ENCODE measurements at regions of chr12 and their contacts with region 1.

Region 1: DNA sequence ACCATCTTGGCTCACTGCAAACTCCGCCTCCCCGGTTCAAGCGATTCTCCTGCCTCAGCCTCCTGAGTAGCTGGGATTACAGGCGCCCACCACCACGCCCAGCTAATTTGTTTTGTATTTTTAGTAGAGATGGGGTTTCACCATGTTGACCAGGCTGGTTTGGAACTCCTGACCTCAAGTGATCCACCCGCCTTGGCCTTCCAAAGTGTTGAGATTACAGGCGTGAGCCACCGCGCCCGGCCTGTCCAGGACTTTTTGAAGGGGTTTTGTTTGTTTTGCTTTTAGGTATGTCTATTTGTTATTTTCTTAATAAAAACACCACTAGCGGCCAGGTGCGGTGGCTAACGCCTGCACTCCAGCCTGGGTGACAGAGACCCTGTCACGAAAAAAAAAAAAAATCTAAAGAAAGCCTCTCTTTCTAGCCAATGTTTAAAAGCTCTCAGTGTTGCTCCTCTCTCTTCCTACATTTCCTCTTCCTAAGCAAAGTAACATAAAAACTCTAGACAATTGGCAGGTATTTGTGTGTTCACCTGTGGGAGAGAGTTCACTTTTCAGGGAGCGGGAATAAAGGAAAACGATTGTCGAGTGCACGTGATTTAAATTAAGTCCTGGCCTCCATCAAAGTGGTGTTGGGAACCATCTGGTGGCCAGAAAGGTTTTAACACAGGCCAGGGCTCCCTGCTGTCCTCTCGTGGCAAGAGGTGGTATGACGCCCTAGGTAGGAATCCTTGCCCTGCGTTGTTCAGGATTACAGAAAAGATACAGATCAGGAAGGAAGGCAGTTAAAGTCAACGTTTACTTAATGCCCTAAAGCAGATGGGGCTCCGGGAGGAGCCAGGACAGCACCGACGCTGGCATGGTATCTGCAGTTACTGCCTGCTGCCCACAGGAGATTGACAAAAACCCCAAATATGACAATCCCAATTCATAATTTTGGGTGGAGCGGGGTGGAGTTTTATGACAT is 36.2 kb upstream of the ATP23 start:
- DNase-seq: peak; percentile 88
- ATAC-seq: peak; percentile 97
- H3K4me3 Mint-ChIP-seq: no peak overlapping the region
- H3K27ac Mint-ChIP-seq: no peak overlapping the region
- H3K4me1 Mint-ChIP-seq: peaks cover 8% of the 10 kb centered on the region
- H3K27me3 Mint-ChIP-seq: peaks cover 20% of the 10 kb centered on the region

Region 2: DNA sequence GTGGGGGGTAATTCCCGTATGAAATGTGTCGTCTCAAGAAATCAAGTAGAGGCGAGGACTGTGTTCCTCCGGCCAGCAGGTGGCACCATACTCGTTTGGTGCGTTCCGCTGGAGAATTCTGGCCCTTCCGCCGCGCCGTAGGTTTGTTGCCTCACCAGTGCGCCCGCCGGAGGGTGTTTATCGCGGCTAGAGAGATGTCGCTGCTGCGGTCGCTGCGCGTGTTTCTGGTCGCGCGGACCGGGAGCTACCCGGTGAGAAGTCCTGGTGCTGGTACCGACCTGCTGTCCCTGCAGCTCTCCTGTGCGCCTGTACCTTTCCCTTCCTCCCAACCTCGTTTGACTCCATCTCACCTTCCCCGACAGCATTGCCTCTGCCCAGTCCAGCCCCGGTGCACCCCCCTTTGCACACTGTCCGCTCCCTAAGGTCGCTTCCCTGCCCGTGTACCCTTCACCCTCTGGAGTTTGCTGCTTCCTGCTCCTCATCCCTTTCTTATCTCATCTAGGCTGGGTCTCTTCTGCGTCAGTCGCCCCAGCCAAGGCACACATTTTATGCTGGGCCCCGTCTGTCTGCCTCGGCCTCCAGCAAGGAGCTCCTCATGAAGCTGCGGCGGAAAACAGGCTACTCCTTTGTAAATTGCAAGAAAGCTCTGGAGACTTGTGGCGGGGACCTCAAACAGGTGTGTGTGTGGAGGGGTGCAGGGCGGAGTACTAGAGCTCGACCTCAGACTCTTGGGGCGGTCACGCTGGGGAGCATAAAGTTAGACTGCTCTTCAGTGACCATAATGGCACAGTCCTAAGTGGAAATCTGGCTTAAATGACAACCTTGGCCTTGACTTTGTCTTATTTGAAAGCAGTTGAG is 122.3 kb before region 1 on chr12 and contains the start of gene TSFM:
- CTCF ChIA-PET with region 1: interaction called, 15 read pairs
- DNase-seq: peak; percentile 97
- ATAC-seq: peak; percentile 93
- H3K4me3 Mint-ChIP-seq: peak within 1 kb of the TSS; percentile 97
- H3K27ac Mint-ChIP-seq: peak within 1 kb of the TSS; percentile 96
- H3K4me1 Mint-ChIP-seq: peaks cover 38% of the 10 kb centered on the region
- H3K27me3 Mint-ChIP-seq: no peaks in the 10 kb centered on the region
- total RNA-seq, gene TSFM: 32.2 to 45.8 TPM

Region 3: DNA sequence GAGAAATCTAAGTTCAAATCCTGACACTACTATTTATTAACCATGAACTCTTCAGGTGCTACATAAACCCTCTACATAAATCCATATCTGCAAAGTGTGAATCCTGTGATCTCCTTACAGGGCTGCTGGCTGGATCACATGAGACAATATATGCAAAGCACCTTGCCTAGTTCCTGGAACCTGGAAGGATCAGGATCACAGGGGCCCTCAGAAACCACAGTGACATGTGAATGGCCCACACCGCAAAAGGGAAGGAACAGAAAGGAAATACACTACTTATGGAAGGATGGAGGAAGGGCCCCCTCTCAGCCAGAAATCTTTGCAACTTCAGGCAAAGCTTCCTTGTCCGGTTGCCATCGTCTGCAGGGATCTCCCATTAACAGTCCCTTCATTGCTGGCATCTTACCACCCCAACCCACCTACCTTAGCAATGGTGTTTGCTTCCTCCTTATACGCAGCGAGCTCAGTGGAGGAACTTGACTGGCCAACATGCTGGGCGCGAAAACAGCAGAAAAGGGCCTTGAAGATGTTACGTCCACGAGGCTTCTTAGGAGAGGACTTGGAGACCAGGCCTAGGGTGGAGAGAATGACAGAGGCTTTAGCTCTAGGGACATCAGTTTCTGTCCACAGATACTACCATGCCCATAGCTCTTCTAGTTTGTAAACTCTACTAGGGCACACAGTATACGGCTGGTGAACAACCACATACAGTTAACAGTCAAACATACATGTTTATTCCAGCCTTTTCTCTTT is 75.9 kb before region 1 on chr12:
- CTCF ChIA-PET with region 1: interaction called, 68 read pairs
- DNase-seq: no peak
- ATAC-seq: no peak
- H3K4me3 Mint-ChIP-seq: no peak overlapping the region
- H3K27ac Mint-ChIP-seq: no peak overlapping the region
- H3K4me1 Mint-ChIP-seq: peaks cover 32% of the 10 kb centered on the region
- H3K27me3 Mint-ChIP-seq: no peaks in the 10 kb centered on the region

Region 4: DNA sequence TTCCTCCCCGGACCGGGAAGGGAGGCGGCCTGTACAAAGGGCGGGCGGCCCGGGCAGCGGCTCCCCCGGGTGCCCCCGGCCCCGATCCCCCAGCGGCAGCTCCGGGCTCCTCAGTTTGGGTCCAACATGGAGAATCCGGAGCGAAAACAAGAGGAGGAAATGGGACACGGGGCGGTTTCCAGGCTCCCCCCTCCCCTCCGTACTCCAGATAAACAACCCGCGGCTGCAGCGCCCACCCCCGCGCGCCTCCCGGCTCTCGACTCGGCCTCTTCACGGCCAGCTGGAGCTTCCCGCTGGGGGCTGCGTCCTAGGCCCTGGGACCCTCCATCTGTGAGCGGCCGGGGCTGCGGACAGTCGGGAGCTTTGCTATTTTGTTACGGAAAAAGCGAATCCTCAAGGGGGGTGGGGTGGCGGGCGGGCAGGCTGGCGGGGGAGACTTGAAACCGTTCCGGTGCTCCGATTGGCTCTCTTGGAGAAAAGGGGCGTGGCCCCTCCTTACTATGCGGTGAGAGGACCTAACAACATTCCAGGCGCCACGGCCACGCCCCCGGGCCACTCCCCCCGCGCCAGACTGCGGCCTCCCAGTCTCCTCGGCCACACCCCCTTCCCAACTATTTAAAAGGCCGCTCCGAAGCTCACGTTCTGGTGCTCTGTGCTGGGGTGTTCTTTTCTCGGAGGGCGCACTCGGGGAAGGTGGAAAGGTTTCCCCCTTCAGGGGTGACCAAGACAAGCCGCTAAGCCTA is 58.4 kb before region 1 on chr12 and contains the start of gene CTDSP2:
- CTCF ChIA-PET with region 1: interaction called, 42 read pairs
- DNase-seq: peak; percentile 91
- ATAC-seq: peak; percentile 53
- H3K4me3 Mint-ChIP-seq: peak within 1 kb of the TSS; percentile 74
- H3K27ac Mint-ChIP-seq: peak within 1 kb of the TSS; percentile 65
- H3K4me1 Mint-ChIP-seq: peaks cover 33% of the 10 kb centered on the region
- H3K27me3 Mint-ChIP-seq: peaks cover 26% of the 10 kb centered on the region
- total RNA-seq, gene CTDSP2: 76.2 to 103 TPM

Region 5: DNA sequence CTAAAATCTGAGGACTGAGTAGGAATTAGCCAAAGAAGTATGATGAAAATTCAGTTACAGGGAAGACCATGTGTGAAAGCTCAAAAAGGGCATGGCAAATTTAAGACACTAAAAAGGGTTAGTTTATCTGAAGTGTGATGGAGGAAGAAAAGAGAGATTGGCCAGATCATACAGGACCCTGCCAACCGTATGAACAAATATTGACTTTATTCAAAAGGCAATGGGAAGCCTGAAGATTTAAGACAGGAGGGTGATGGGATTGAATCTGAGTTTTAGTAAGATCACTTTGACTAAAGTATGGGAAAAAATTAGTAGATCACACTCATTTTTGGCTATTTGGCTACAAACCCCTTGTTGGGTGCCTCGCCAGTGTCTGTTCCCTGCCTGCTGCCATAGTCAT is 27.9 kb before region 1 on chr12:
- CTCF ChIA-PET with region 1: interaction called, 10 read pairs
- DNase-seq: no peak
- ATAC-seq: no peak
- H3K4me3 Mint-ChIP-seq: no peak overlapping the region
- H3K27ac Mint-ChIP-seq: no peak overlapping the region
- H3K4me1 Mint-ChIP-seq: peaks cover 10% of the 10 kb centered on the region
- H3K27me3 Mint-ChIP-seq: peaks cover 6% of the 10 kb centered on the region

Region 6: DNA sequence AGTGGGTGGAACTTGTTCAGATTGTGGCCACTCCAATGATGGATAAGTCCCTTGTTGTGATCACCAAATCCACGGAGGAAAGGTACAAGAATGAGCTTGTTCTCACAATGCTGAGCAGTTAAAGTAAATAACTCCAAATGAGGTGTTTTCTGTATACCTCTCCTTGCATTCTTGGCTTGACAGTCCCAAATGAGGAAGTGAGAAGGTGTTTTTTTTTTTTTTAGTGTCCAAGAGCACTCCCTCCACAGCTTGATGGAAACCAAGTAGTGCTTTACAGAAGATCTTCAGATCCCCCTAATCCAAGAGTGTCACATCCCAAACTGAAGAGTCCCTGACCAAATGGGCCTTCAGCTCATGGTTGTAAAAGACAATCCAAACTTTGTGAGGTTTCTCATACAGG is 189.9 kb after region 1 on chr12:
- CTCF ChIA-PET with region 1: no interaction called
- DNase-seq: no peak
- ATAC-seq: no peak
- H3K4me3 Mint-ChIP-seq: no peak overlapping the region
- H3K27ac Mint-ChIP-seq: no peak overlapping the region
- H3K4me1 Mint-ChIP-seq: no peaks in the 10 kb centered on the region
- H3K27me3 Mint-ChIP-seq: no peaks in the 10 kb centered on the region